OCI-LY7 (cell line): ENCODE measurements at regions of chr3 and their contacts with region 1.

Region 1: DNA sequence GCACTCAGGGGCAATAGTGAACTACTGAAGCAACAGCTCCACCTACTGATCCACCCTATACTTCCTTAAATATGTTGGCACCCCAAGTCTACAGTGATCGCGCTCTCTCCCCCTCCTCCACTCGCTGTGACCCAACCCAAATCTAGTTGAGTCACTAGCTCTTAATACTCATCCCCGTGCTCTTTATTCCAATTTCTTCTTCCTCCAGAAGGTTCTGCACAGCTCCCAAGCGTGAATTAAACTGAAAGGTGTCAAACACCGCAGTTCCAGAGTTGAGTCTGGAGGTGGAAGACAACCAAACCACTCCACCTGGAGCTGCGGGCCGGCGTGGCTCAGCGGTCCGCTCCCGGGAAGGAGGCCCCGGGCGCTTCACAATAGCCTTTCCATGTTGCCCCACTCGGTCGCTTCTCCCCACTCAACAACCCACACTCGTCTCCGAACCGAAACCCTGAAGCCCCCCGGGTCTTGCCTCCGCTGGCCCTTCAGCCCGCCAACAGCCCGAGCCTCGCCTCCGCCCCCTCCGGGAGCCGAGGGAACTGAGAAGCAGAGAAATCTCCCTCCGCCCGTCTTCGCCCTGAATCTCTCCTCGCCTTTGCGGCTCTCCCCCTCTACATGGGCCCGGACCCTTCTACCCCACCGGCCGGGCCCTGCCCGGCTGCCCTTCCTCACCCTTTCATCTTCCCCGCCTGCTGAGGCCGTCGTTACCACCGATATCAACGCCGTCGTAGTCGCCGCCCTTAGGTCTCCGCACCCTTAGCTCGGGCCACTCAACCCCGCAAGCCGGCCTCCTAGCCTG is 578 bp downstream of the NAA50 start:
- DNase-seq: peak; percentile 88
- H3K4me3 ChIP-seq: peak overlapping the region; percentile 83
- H3K27ac ChIP-seq: peak overlapping the region; percentile 95
- H3K4me1 ChIP-seq: peaks cover 56% of the 10 kb centered on the region
- CTCF ChIP-seq: peak; percentile 85

Region 2: DNA sequence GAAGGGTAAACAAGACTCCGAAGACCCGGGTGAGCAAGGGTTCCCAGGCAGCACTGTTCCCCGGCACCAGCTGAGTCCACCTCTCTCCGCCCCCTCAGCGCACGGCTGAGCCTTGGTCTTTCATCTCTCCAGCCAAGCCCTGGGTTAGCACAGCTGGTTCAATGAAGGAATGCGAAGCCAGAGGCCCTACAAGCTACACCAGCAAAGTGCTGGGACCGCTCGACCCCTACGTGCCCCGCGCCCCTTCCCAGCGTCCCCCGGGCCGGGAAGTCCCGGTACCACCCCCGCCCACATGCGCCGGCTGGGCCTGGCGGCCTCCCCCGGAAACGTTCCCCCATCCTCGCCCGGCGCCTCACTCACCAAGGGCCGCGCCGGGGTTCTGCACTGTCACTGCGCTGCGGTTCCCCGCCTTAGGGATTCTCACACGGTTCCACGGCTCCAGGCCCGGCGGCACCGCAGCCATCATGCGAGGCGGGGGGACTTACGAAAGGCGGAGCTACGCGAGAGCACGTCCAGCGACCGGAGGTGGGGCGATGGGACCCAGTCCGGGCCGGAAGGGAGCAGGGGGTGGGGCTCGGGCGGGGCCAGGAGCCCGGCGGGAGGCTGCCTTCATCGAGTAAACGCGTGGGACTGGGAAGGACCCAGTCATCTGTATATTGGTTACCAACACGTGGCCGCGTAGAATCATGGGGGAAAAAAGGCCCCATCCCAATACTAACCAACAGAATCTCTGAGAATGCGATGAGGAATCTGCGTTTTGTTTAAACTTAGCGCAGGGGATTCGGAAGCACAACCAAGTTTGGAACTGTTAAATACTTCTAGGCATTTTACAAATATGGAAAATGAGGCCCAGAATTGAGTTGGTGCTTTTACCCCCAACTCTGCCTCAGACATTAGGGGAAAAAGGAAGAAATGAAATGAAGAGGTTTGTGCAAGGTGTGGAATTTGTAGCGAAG is 726.0 kb before region 1 on chr3:
- CTCF ChIA-PET with region 1: no interaction called
- POLR2A ChIA-PET with region 1: no interaction called
- intact Hi-C with region 1: loop called (anchors 2 kb)
- DNase-seq: peak; percentile 90
- H3K4me3 ChIP-seq: peak overlapping the region; percentile 79
- H3K27ac ChIP-seq: peak overlapping the region; percentile 76
- H3K4me1 ChIP-seq: peaks cover 26% of the 10 kb centered on the region
- CTCF ChIP-seq: no peak

Region 3: GRCh38 chr3:113264283-113265131 is 481.0 kb before region 1 on chr3:
- CTCF ChIA-PET with region 1: no interaction called
- POLR2A ChIA-PET with region 1: no interaction called
- intact Hi-C with region 1: no loop called
- DNase-seq: no peak
- H3K4me3 ChIP-seq: no peak overlapping the region
- H3K27ac ChIP-seq: no peak overlapping the region
- H3K4me1 ChIP-seq: no peaks in the 10 kb centered on the region
- CTCF ChIP-seq: no peak

Region 4: DNA sequence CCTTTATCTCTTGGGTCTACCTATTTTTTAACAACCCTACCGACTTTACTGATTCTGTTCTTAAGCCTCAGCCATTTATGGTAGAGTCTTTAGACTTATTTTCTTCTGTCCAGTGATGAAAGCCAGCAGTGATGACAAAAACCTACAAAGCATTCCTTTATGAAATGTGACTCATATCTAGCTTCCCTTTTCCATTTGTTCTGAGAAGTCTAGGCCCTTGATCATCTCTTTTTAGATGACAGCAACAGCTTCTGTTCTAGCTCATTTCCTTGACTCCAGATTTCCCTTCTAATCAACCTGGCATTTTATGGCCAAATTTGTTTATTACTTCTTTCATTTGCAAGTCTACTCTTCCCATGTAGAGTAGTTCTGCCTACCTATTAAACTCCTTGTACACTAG is 340.3 kb before region 1 on chr3:
- CTCF ChIA-PET with region 1: no interaction called
- POLR2A ChIA-PET with region 1: no interaction called
- intact Hi-C with region 1: no loop called
- DNase-seq: no peak
- H3K4me3 ChIP-seq: no peak overlapping the region
- H3K27ac ChIP-seq: no peak overlapping the region
- H3K4me1 ChIP-seq: no peaks in the 10 kb centered on the region
- CTCF ChIP-seq: no peak

Region 5: GRCh38 chr3:113575206-113575605 is 170.3 kb before region 1 on chr3:
- CTCF ChIA-PET with region 1: no interaction called
- POLR2A ChIA-PET with region 1: no interaction called
- intact Hi-C with region 1: loop called (anchors 2 kb)
- DNase-seq: no peak
- H3K4me3 ChIP-seq: no peak overlapping the region
- H3K27ac ChIP-seq: no peak overlapping the region
- H3K4me1 ChIP-seq: no peaks in the 10 kb centered on the region
- CTCF ChIP-seq: no peak

Region 6: GRCh38 chr3:113696658-113697499 is 48.6 kb before region 1 on chr3:
- CTCF ChIA-PET with region 1: no interaction called
- POLR2A ChIA-PET with region 1: interaction called, 5 read pairs
- intact Hi-C with region 1: loop called (anchors 1 kb)
- DNase-seq: peak; percentile 99
- H3K4me3 ChIP-seq: peak overlapping the region; percentile 85
- H3K27ac ChIP-seq: peak overlapping the region; percentile 67
- H3K4me1 ChIP-seq: peaks cover 19% of the 10 kb centered on the region
- CTCF ChIP-seq: no peak

Region 7: GRCh38 chr3:113832477-113833164 is 87.2 kb after region 1 on chr3:
- CTCF ChIA-PET with region 1: no interaction called
- POLR2A ChIA-PET with region 1: interaction called, 3 read pairs
- intact Hi-C with region 1: loop called (anchors 2 kb)
- DNase-seq: no peak
- H3K4me3 ChIP-seq: no peak overlapping the region
- H3K27ac ChIP-seq: no peak overlapping the region
- H3K4me1 ChIP-seq: peaks cover 40% of the 10 kb centered on the region
- CTCF ChIP-seq: no peak

Region 8: GRCh38 chr3:113947372-113948014 is 202.0 kb after region 1 on chr3 and contains the start of gene ZDHHC23:
- CTCF ChIA-PET with region 1: no interaction called
- POLR2A ChIA-PET with region 1: no interaction called
- intact Hi-C with region 1: loop called (anchors 5 kb)
- DNase-seq: peak; percentile 75
- H3K4me3 ChIP-seq: peak within 1 kb of the TSS; percentile 84
- H3K27ac ChIP-seq: peak within 1 kb of the TSS; percentile 58
- H3K4me1 ChIP-seq: peaks cover 27% of the 10 kb centered on the region
- CTCF ChIP-seq: no peak
- total RNA-seq, gene ZDHHC23: 36.9 and 37.5 TPM in 2 replicates

Region 9: GRCh38 chr3:114056130-114057010 is 310.9 kb after region 1 on chr3 and contains the starts of genes CCDC191 and QTRT2:
- CTCF ChIA-PET with region 1: no interaction called
- POLR2A ChIA-PET with region 1: no interaction called
- intact Hi-C with region 1: loop called (anchors 5 kb)
- DNase-seq: peak; percentile 100
- H3K4me3 ChIP-seq: peak within 1 kb of the TSS; percentile 89
- H3K27ac ChIP-seq: peak within 1 kb of the TSS; percentile 69
- H3K4me1 ChIP-seq: peaks cover 40% of the 10 kb centered on the region
- CTCF ChIP-seq: no peak
- total RNA-seq, gene CCDC191: 5.0 and 5.4 TPM in 2 replicates
- total RNA-seq, gene QTRT2: 43.1 and 47.4 TPM in 2 replicates